Activated B cell treated with CpG ODN at 0.5 μM for 24 hours (primary cell): ENCODE measurements at regions of chr1 and their contacts with region 1.

Region 1: GRCh38 chr1:28248283-28249012 is 10.9 kb upstream of the SESN2 start:
- DNase-seq: peak; percentile 69
- ATAC-seq: peak; percentile 23
- H3K4me3 Mint-ChIP-seq: peak overlapping the region; percentile 72
- H3K27ac Mint-ChIP-seq: peak overlapping the region; percentile 99
- H3K4me1 Mint-ChIP-seq: peaks cover 58% of the 10 kb centered on the region
- H3K27me3 Mint-ChIP-seq: no peaks in the 10 kb centered on the region
- CTCF ChIP-seq: peak; percentile 57

Region 2: GRCh38 chr1:28235755-28236655 is 12.4 kb before region 1 on chr1 and contains the start of gene ATP5IF1:
- CTCF ChIA-PET with region 1: interaction called, 14 read pairs
- POLR2A ChIA-PET with region 1: interaction called, 171 read pairs
- intact Hi-C with region 1: loop called (anchors 1 kb)
- DNase-seq: peak; percentile 82
- ATAC-seq: peak; percentile 95
- H3K4me3 Mint-ChIP-seq: no peak within 1 kb of the TSS
- H3K27ac Mint-ChIP-seq: no peak within 1 kb of the TSS
- H3K4me1 Mint-ChIP-seq: peaks cover 27% of the 10 kb centered on the region
- H3K27me3 Mint-ChIP-seq: no peaks in the 10 kb centered on the region
- CTCF ChIP-seq: no peak
- total RNA-seq, gene ATP5IF1: 87.0 and 104 TPM in 2 replicates

Region 3: GRCh38 chr1:28359592-28360239 is 111.3 kb after region 1 on chr1:
- CTCF ChIA-PET with region 1: interaction called, 19 read pairs
- POLR2A ChIA-PET with region 1: interaction called, 5 read pairs
- intact Hi-C with region 1: loop called (anchors 1 kb)
- DNase-seq: peak; percentile 50
- ATAC-seq: peak; percentile 75
- H3K4me3 Mint-ChIP-seq: no peak overlapping the region
- H3K27ac Mint-ChIP-seq: no peak overlapping the region
- H3K4me1 Mint-ChIP-seq: peaks cover 2% of the 10 kb centered on the region
- H3K27me3 Mint-ChIP-seq: no peaks in the 10 kb centered on the region
- CTCF ChIP-seq: peak; percentile 91

Region 4: DNA sequence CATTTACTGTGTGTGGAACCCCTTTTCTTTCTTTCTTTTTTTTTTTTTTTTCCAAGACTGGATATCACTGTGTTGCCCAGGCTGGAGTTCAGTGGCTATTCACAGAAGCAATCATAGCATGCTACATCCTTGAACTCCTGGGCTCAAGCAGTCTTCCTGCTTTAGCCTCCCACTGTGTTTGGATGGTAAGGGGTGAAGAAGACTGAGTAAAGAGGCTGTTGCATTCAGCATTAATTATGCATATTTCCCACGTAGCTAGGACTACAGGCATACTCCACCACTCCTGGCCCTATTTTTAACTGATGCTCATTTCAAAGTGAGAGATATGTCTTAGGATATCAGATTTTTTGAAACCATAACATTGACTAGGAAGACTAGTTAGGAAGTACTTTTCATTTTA is 160.6 kb after region 1 on chr1:
- CTCF ChIA-PET with region 1: interaction called, 3 read pairs
- POLR2A ChIA-PET with region 1: no interaction called
- intact Hi-C with region 1: loop called (anchors 2 kb)
- DNase-seq: no peak
- ATAC-seq: no peak
- H3K4me3 Mint-ChIP-seq: no peak overlapping the region
- H3K27ac Mint-ChIP-seq: no peak overlapping the region
- H3K4me1 Mint-ChIP-seq: peaks cover 7% of the 10 kb centered on the region
- H3K27me3 Mint-ChIP-seq: no peaks in the 10 kb centered on the region
- CTCF ChIP-seq: no peak

Region 5: DNA sequence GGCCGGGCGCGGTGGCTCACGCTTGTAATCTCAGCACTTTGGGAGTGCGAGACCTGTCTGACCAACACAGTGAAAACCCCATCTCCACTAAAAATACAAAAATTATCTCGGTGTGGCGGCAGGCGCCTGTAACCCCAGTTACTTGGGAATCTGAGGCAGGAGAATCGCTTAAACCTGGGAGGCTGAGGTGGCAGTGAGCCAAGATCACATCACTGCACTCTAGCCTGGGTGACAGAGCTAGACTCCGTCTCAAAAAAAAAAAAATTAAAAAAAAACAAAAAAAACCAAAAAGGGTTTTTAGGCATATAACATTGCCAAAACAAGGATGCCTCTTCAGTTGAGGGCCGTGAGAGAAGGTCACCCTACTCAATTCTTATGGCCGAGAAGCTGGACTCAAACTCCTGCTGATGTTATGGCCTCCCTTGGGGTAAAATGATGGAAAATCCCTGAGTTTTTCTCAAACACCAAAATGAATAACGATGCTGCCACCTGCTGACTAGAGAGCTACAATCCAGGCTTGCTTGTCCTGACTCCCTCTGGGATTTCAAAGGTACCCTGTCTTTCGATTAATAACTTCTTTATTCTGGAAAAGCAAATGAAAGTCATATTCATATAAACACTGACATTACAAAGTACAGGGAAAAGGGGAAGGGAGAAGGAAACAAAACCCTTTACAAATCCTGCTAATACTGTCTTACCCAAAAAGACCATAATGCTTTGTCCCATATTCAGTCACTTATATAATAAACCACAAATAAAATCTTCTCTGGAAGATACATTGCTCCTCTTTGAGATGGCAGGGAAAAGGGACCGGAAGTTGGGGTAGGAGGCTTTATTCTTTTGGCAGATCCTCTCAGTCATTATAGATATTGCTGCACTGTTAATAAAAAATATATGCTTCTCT is 354.3 kb after region 1 on chr1:
- CTCF ChIA-PET with region 1: interaction called, 11 read pairs
- POLR2A ChIA-PET with region 1: interaction called, 3 read pairs
- intact Hi-C with region 1: loop called (anchors 5 kb)
- DNase-seq: no peak
- ATAC-seq: peak; percentile 42
- H3K4me3 Mint-ChIP-seq: no peak overlapping the region
- H3K27ac Mint-ChIP-seq: no peak overlapping the region
- H3K4me1 Mint-ChIP-seq: no peaks in the 10 kb centered on the region
- H3K27me3 Mint-ChIP-seq: no peaks in the 10 kb centered on the region
- CTCF ChIP-seq: peak; percentile 53

Region 6: GRCh38 chr1:28877132-28877781 is 628.8 kb after region 1 on chr1:
- CTCF ChIA-PET with region 1: interaction called, 8 read pairs
- POLR2A ChIA-PET with region 1: no interaction called
- intact Hi-C with region 1: loop called (anchors 1 kb)
- DNase-seq: peak; percentile 63
- ATAC-seq: peak; percentile 78
- H3K4me3 Mint-ChIP-seq: no peak overlapping the region
- H3K27ac Mint-ChIP-seq: no peak overlapping the region
- H3K4me1 Mint-ChIP-seq: peaks cover 7% of the 10 kb centered on the region
- H3K27me3 Mint-ChIP-seq: peaks cover 2% of the 10 kb centered on the region
- CTCF ChIP-seq: peak; percentile 88